HEK293T (cell line): ENCODE measurements at regions of chr3 and their contacts with region 1.

Region 1: DNA sequence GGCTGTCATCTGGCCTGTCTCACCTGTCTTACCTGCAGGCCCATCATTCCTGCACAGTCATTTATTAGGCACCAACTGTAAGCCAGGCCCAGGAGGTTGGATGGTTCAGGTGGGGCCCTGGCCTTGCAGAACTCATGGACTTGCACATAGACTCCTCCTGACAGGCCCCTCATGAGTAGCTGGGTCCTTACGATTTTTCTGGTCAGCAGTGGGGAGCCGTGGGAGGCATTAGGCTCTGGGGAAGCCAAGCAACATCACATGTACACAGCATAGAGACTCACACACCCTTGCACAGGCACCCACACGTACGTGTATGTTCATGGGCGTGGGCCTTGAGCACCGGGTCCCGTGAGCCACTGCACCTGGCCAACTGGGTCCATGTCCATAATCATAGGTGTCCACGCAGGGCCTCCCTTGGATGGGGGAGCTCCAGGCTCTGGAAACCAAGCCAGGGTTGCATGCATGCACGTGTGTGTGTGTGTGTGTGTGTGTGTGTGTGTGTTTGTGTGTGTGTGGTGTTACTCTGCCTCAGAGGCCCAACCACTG is 20.3 kb downstream of the CISH start:
- DNase-seq: no peak

Region 2: GRCh38 chr3:50442945-50443579 is 148.2 kb before region 1 on chr3:
- CTCF ChIA-PET with region 1: no interaction called
- POLR2A ChIA-PET with region 1: no interaction called
- DNase-seq: no peak

Region 3: GRCh38 chr3:50568947-50569749 is 22.1 kb before region 1 on chr3 and contains the start of gene HEMK1:
- CTCF ChIA-PET with region 1: no interaction called
- POLR2A ChIA-PET with region 1: interaction called, 15 read pairs
- DNase-seq: peak; percentile 99